ENCODE measurements at regions of chr3 and their contacts with region 1.

Region 1: GRCh38 chr3:13879655-13880204 is at the start of gene WNT7A:
- DNase-seq: peak in 3 of 5 donors; percentile 60 to 70 (median 61)
- H3K4me3 ChIP-seq: peak within 1 kb of the TSS; percentile 61 to 64
- H3K4me3 Mint-ChIP-seq: peak within 1 kb of the TSS; percentile 92 to 99 (median 94)
- H3K27ac ChIP-seq: peak within 1 kb of the TSS; percentile 58
- H3K27ac Mint-ChIP-seq: peak within 1 kb of the TSS; percentile 69 to 95 (median 85)
- H3K4me1 ChIP-seq: peaks cover 20% of the 10 kb centered on the region
- H3K4me1 Mint-ChIP-seq: peaks cover 10 to 37% (median 24%) of the 10 kb centered on the region in 4 donors
- H3K27me3 ChIP-seq: no peaks in the 10 kb centered on the region
- H3K27me3 Mint-ChIP-seq: peaks cover 12 to 13% of the 10 kb centered on the region in 2 donors
- total RNA-seq, gene WNT7A: 18.0 to 19.3 TPM

Region 2: DNA sequence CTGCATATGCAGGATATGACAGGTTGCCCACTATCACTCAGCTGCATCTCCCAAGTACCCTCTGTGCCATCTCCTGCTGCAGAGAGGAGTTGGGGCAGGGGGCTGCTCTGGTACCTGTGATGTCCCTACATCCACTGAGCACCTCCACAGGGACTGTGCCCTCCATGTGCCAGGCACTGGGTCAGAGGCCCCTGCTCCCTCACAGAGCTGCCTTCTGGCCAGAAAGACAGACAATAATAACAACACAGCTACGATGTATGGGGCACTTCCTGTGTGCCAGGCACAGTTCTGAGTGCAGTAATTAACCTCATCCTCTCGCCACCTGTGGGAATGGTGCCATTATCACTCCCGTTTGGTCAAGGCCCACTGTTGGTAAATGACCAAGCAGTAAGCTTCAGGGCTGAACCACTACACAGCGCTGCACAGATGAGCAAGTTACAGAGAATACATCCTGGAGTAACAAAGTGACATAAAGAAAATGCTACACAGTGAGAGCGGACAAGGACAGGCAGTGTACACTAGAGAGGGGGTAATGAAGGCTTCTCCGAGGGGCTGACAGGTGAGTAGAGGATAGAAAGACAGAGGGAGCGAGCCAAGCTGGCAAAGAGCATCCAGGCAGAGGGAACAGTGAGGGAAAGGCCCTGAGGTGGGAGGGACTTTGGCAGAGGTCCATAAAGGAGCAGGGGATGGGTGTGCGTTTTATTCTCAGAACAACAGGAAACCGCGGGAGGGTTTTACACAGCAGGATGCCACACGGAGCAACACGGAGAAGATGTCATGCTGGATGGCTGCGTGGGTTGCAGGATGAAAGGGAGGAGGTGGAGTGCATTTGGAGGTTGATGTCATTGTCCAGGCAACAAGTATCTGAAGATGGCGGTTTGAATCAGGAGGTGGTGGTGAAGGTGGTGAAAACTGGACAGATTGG is 13.4 kb before region 1 on chr3:
- CTCF ChIA-PET with region 1: interaction called, 48 read pairs
- POLR2A ChIA-PET with region 1: interaction called, 137 read pairs
- intact Hi-C with region 1: loop called (anchors 1 kb)
- DNase-seq: peak; percentile 80 to 87 (median 84)
- H3K4me3 ChIP-seq: peak overlapping the region in 1 of 2 donors; percentile 36
- H3K4me3 Mint-ChIP-seq: peak overlapping the region; percentile 72 to 84 (median 79)
- H3K27ac ChIP-seq: peak overlapping the region; percentile 64
- H3K27ac Mint-ChIP-seq: peak overlapping the region; percentile 83 to 100 (median 98)
- H3K4me1 ChIP-seq: peaks cover 72% of the 10 kb centered on the region
- H3K4me1 Mint-ChIP-seq: peaks cover 48 to 75% (median 63%) of the 10 kb centered on the region in 4 donors
- H3K27me3 ChIP-seq: no peaks in the 10 kb centered on the region
- H3K27me3 Mint-ChIP-seq: no peaks in the 10 kb centered on the region

Region 3: DNA sequence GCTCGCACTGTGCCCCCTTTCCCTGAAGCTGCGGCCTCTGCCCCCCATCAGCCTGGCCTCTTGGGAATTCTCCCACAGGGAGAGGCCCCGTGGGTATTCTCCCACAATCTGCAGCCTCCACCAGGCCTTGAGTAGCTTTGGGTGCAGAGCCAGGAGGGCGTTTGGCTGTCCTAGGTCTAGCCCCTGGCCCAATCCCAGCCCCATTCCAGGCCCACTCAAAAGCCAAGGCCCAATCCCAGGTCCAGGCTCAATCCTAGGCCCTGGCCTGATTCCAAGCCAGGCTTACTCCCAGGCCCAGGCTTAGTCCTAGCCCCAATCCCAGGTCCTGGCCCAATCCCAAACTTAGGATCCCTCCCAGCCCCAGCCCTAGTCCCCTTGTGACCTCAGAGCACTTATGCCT is 185.2 kb after region 1 on chr3:
- CTCF ChIA-PET with region 1: no interaction called
- POLR2A ChIA-PET with region 1: no interaction called
- intact Hi-C with region 1: no loop called
- DNase-seq: no peak
- H3K4me3 ChIP-seq: no peak overlapping the region
- H3K4me3 Mint-ChIP-seq: no peak overlapping the region
- H3K27ac ChIP-seq: no peak overlapping the region
- H3K27ac Mint-ChIP-seq: no peak overlapping the region
- H3K4me1 ChIP-seq: no peaks in the 10 kb centered on the region
- H3K4me1 Mint-ChIP-seq: no peaks in the 10 kb centered on the region
- H3K27me3 ChIP-seq: no peaks in the 10 kb centered on the region
- H3K27me3 Mint-ChIP-seq: peaks cover 3 to 7% of the 10 kb centered on the region in 2 donors

Region 4: GRCh38 chr3:14234251-14235002 is 354.7 kb after region 1 on chr3:
- CTCF ChIA-PET with region 1: no interaction called
- POLR2A ChIA-PET with region 1: no interaction called
- intact Hi-C with region 1: no loop called
- DNase-seq: no peak
- H3K4me3 ChIP-seq: no peak overlapping the region
- H3K4me3 Mint-ChIP-seq: no peak overlapping the region
- H3K27ac ChIP-seq: no peak overlapping the region
- H3K27ac Mint-ChIP-seq: no peak overlapping the region
- H3K4me1 ChIP-seq: no peaks in the 10 kb centered on the region
- H3K4me1 Mint-ChIP-seq: peaks cover 0 to 6% (median 5%) of the 10 kb centered on the region in 4 donors
- H3K27me3 ChIP-seq: no peaks in the 10 kb centered on the region
- H3K27me3 Mint-ChIP-seq: peaks cover 26 to 32% of the 10 kb centered on the region in 2 donors

Measured in CD4-positive, alpha-beta memory T cell (primary cell).